GM13976 (cell line): ENCODE measurements at regions of chr2 and their contacts with region 1.

Region 1: DNA sequence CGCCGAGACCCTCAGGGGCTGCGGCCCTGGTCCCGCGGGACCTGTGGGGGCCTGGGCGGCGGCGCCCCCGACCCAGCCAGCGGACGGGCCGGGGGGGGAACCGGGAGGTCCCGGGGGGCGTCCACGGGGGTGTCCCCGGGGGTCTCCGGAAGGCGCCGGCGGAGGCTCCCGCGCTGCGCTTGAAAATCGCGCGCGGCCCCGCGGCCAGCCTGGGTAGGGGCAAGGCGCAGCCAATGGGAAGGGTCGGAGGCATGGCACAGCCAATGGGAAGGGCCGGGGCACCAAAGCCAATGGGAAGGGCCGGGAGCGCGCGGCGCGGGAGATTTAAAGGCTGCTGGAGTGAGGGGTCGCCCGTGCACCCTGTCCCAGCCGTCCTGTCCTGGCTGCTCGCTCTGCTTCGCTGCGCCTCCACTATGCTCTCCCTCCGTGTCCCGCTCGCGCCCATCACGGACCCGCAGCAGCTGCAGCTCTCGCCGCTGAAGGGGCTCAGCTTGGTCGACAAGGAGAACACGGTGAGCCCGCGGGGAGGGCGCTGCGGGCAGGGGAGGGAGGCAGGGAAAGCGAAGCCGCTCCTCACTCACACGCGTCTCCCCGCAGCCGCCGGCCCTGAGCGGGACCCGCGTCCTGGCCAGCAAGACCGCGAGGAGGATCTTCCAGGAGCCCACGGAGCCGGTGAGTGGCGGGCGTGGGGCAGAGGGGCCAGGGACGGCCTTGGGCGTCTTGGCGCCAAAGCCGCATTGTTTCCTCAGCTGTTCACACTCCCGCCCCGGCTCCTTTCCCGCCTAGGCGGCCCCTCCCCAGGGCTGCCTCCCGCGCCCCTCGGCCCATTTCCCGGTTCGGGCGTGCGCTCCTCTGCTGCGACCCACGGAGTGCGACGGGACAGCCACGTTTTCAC is at the start of gene RRM2:
- DNase-seq: peak; percentile 96
- CTCF ChIP-seq: no peak

Region 2: DNA sequence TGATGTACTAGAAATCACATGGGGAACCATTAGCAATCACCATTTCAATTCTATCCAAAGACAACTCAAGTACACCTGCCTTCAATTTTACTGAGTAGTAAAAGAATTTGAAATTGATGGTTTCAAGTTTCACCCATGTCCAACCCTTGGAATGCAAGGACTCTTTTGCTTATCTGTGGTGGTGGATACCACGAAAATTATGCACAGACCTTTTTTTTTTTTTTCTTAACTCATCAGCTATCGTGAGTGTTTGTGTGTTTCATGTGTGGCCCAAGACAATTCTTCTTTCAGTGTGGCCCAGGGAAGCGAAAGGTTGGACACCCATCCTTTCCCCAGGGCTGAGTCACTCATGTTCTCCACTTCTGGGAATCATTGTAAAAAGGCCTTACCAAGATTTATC is 1417.7 kb before region 1 on chr2:
- in situ Hi-C with region 1: no loop called
- DNase-seq: no peak
- CTCF ChIP-seq: no peak

Region 3: DNA sequence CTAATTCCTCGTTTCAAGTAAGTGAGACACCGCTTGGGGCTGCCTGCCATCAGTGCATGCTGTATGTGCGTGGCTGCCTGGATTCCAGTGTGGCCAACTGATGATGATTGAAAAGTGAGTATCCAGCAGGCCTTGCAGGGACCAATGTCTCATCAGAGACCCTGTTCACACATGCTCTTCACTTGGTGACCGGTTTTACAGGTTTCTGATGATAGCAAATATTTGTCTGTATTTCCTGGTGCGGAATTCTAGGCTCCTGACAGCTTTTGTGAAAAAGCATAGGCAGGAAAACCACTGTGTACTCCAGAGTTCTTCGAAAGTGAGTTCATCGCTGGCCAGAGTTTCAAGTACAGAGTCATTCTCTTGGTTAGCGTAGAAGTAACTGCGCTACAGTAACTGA is 478.0 kb before region 1 on chr2:
- in situ Hi-C with region 1: no loop called
- DNase-seq: no peak
- CTCF ChIP-seq: no peak

Region 4: GRCh38 chr2:10019174-10019573 is 103.5 kb before region 1 on chr2:
- in situ Hi-C with region 1: no loop called
- DNase-seq: no peak
- CTCF ChIP-seq: no peak

Region 5: GRCh38 chr2:10412384-10412783 is 289.8 kb after region 1 on chr2:
- in situ Hi-C with region 1: loop called (anchors 10 kb)
- DNase-seq: peak; percentile 67
- CTCF ChIP-seq: no peak

Region 6: DNA sequence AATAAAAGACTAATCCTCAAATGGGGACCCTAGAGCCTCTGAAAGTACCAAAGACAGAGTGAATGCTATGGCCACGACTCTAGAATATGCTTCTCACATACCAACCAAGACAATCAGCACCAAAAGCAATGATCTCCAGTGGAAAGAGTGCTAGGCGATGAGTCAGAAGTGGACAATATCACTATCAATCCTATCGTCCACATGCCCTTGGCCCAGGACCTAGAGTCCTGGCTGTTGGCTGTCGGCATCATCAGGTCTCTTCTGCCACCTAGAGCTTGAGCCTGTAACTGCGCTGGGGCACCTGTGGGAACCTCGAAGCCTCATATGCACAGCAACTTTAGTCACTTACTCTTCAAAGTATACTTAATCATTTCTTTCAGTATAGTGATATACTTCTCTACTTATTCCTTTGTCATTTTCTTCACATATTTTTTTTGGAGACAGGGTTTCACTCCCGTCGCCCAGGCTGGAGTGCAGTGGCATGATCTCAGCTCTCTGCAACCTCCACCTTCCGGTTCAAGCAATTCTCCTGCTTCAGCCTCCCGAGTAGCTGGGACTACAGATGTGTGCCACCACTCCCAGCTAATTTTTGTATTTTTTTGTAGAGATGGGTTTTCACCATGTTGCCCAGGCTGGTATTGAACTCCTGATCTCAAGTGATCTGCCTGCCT is 537.4 kb after region 1 on chr2:
- in situ Hi-C with region 1: loop called (anchors 25 kb)
- DNase-seq: no peak
- CTCF ChIP-seq: peak; percentile 53